ENCODE measurements at regions of chr6 and their contacts with region 1.

Region 1: GRCh38 chr6:110389689-110390382 is 25.5 kb downstream of the DDO start:
- DNase-seq: no peak
- H3K4me3 ChIP-seq: no peak overlapping the region
- H3K27me3 ChIP-seq: no peaks in the 10 kb centered on the region; the same call in 1 of the 2 replicates
- CTCF ChIP-seq: no peak

Region 2: DNA sequence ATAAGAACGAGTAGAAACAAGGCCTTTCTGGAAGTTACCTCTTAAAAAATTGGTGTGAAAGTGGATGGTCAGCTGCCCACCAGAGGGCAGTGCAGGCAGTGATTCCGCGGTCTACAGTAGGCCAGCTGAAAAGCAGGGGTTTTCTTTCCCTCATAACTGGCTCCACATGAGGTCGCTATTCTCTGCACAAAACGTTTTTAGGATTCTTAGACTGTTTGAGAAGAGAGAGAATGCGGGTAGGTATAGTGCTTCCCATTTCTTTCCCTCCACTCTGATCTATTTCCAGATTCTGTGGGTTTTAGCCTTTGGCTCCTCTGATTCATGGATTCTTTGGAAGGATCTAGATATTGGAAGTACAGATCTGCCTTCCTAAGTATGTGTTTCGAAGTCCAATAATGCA is 684.6 kb before region 1 on chr6:
- CTCF ChIA-PET with region 1: interaction called, 18 read pairs
- POLR2A ChIA-PET with region 1: no interaction called
- DNase-seq: peak; percentile 53
- H3K4me3 ChIP-seq: no peak overlapping the region
- H3K27me3 ChIP-seq: no peaks in the 10 kb centered on the region
- CTCF ChIP-seq: peak; percentile 95

Region 3: DNA sequence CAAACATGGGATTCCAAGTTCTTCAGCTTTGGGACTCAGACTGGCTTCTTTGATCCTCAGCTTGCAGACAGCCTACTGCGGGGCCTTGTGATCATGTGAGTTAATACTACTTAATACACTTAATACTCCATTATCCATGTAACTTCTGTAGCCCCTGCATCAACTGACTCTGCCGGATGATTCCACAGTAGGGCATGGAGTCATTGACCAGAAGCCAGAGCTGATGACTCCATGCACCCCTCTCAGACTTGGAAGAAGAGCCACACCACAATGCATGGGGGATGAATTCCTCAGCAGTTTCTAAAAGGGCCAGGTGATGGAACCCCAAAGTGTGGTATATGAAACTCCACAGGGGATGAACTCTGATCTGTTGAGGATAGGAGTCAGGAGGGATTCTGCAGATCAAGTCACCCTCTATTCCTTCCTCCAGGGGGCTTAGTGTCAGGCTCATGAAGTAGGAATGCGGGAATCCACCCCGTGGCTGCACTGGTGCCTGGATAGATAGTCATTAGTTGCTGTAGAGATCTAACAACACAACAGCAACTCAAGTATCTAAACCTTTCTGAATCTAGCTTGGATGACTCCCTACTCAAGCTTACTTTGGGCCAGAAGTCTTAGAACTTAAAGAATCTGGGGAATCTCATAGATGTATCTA is 341.5 kb before region 1 on chr6:
- CTCF ChIA-PET with region 1: interaction called, 13 read pairs
- POLR2A ChIA-PET with region 1: no interaction called
- DNase-seq: no peak
- H3K4me3 ChIP-seq: no peak overlapping the region
- H3K27me3 ChIP-seq: peaks cover 2% of the 10 kb centered on the region
- CTCF ChIP-seq: no peak

Region 4: GRCh38 chr6:110179401-110180227 is 210.2 kb before region 1 on chr6 and contains the start of gene WASF1:
- CTCF ChIA-PET with region 1: interaction called, 32 read pairs
- POLR2A ChIA-PET with region 1: no interaction called
- DNase-seq: peak; percentile 94
- H3K4me3 ChIP-seq: peak within 1 kb of the TSS; percentile 81
- H3K27me3 ChIP-seq: no peaks in the 10 kb centered on the region
- CTCF ChIP-seq: no peak
- polyA plus RNA-seq, gene WASF1: 19.5 and 21.8 TPM in 2 replicates

Measured in BJ (cell line).